ENCODE measurements at regions of chr2 and their contacts with region 1.

Region 1: DNA sequence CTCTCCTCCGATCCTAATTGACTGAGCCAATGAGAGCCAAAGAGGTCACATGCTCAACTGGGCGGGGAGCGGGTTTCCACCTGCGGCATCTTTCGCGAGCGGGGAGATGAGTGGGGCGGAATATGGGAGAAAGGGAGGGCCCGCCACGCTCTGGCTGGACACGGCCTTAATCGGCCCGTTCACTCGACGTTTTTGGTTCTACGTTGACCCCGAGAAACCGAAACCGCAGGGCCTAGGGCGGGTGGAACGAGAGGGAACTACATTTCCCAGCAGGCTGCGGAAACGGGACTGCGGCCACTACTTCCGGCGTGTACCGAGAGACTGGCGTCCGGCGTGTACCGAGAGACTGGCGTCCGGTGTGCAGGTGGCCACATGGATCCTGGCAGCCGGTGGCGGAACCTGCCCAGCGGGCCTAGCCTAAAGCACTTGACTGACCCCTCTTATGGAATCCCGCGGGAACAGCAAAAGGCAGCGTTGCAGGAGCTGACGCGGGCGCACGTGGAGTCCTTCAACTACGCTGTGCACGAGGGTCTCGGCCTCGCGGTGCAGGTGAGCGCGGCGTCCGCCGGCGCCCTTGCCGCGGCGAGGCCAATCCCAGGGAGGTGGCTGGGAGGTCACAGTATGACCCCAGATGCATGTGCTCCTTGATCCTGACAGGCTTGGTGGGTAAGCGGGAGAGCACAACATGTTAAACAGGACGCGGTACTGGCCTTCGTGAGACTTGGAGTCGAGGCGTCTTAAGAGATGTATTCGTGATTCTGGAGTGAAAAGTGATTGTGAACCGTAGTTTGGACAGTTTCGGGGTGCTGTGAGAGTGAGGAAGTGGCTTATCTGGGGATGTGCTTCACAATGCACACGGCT is at the start of gene POLR1B:
- DNase-seq: peak; percentile 94
- H3K4me3 Mint-ChIP-seq: no peak within 1 kb of the TSS
- H3K27ac Mint-ChIP-seq: no peak within 1 kb of the TSS
- H3K4me1 Mint-ChIP-seq: peaks cover 9% of the 10 kb centered on the region
- H3K27me3 Mint-ChIP-seq: no peaks in the 10 kb centered on the region
- total RNA-seq, gene POLR1B: 71.9 and 84.5 TPM in 2 replicates

Region 2: DNA sequence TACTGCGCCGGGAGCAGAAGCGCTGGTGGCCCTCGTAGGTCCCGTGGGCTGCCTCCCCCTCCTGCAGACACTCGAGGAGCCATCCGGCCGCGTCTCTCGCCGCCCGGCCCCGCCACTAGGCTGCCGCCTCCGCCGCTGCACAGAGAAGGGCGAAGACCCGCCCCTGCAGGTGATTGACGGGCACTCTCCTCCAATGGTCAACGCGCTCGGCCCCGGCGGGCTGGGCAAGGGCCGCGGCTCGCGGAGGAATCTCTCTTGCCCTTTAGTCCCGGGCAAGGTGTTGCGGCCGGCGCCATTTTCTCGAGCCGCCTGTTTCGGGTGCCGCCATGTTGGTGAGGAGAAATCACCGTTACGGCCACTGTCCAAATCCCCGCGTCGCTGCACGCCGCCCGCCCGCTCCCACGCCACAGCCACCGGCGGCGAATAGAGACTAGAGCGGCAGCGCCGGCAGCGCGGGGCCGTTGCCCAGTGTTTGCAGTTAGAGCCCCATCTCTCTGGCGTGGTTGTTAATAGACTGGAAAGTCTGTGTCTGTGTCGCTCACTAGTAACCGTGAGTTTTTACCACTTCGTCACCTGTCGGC is 267.0 kb before region 1 on chr2 and contains the start of gene ZC3H6:
- intact Hi-C with region 1: loop called (anchors 5 kb)
- DNase-seq: peak; percentile 100
- H3K4me3 Mint-ChIP-seq: peak within 1 kb of the TSS; percentile 92
- H3K27ac Mint-ChIP-seq: peak within 1 kb of the TSS; percentile 99
- H3K4me1 Mint-ChIP-seq: peaks cover 8% of the 10 kb centered on the region
- H3K27me3 Mint-ChIP-seq: no peaks in the 10 kb centered on the region
- total RNA-seq, gene ZC3H6: 4.9 and 6.2 TPM in 2 replicates

Region 3: DNA sequence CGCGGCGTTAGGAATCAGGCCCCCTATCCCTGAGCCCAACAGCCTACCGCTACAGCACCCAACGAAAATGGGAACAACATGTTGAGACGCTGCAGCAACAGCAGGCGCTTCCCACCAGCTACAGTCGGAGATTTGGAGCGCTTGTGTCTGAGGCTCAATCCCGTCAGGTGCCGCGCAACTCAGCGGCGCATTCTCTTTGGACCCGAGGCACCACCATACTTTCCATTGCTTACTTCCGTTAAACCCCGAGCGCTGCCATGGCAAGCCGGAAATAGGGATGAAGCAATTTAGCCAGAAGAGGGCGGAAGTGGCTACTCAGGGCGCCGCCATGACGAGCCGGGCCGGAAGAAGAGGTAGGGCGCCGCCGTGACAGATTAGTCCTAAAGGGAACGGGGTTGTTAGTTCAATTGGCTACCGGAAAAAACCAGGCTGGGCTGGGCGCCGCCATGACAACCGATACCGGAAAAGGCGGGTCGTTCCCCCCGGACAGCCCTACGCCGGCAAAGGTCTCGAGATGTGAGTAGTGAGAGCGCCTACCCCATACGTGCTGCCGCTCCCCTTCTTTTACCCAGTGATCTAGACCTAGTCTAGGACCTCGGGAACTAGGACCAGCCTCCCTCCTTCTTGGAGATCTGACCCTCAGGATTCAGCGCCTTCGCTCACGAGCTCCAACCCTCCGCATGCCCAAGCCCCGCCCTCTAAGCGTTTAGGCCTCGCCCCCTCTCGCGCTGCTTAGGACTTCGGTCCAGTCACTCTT is 42.0 kb after region 1 on chr2 and contains the start of gene CHCHD5:
- intact Hi-C with region 1: loop called (anchors 1 kb)
- DNase-seq: peak; percentile 98
- H3K4me3 Mint-ChIP-seq: peak within 1 kb of the TSS; percentile 93
- H3K27ac Mint-ChIP-seq: peak within 1 kb of the TSS; percentile 99
- H3K4me1 Mint-ChIP-seq: peaks cover 33% of the 10 kb centered on the region
- H3K27me3 Mint-ChIP-seq: no peaks in the 10 kb centered on the region
- total RNA-seq, gene CHCHD5: 36.4 and 37.6 TPM in 2 replicates

Region 4: DNA sequence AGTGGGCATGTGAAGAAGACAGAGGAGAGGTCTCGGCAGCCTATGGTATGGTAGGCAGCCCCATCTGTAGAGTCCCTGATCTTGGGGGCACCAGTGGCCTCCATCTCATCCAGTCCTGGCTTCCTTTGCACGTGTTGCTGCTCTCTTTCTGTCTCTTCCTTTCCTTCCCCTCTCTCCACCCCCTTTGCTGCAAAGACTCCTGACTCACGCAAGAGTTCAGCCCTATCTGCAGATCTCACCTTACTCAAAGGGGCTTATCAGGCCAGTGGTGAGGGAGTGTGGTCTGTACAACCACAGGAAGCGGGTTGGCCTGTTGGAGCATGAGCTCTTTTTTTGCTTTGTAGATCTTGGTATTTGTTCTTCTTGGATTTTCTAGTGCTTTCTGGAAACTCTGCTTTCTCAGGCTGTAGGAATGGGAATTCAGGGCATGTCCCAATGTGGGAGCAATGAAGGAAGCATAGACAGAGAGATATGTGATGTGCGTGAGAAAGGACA is 163.9 kb after region 1 on chr2:
- intact Hi-C with region 1: no loop called
- DNase-seq: peak; percentile 94
- H3K4me3 Mint-ChIP-seq: peak overlapping the region; percentile 74
- H3K27ac Mint-ChIP-seq: peak overlapping the region; percentile 69
- H3K4me1 Mint-ChIP-seq: peaks cover 45% of the 10 kb centered on the region
- H3K27me3 Mint-ChIP-seq: no peaks in the 10 kb centered on the region

Measured in activated CD4-positive, alpha-beta T cell treated with anti-CD3 and anti-CD28 coated beads, Interleukin-2, amount 10 ng/mL, durations not matched to agents 24 days and 14 days (primary cell).